Naive thymus-derived CD4-positive, alpha-beta T cell (primary cell): ENCODE measurements at regions of chr17 and their contacts with region 1.

Region 1: GRCh38 chr17:21043286-21044232 is 748 bp upstream of the USP22 start:
- DNase-seq: peak; percentile 87 to 99 (median 96)
- ATAC-seq: peak; percentile 88
- H3K4me3 ChIP-seq: peak overlapping the region; percentile 73
- H3K4me3 Mint-ChIP-seq: peak overlapping the region; percentile 75 to 96 (median 86)
- H3K27ac ChIP-seq: peak overlapping the region; percentile 91
- H3K27ac Mint-ChIP-seq: peak overlapping the region; percentile 90 to 97 (median 93)
- H3K4me1 ChIP-seq: peaks cover 12 to 22% of the 10 kb centered on the region in 2 donors
- H3K4me1 Mint-ChIP-seq: peaks cover 15 to 40% (median 31%) of the 10 kb centered on the region in 7 donors
- H3K27me3 ChIP-seq: no peaks in the 10 kb centered on the region
- H3K27me3 Mint-ChIP-seq: peaks cover 0 to 4% (median 0%) of the 10 kb centered on the region in 5 donors

Region 2: GRCh38 chr17:20908373-20909273 is 134.9 kb before region 1 on chr17:
- CTCF ChIA-PET with region 1: interaction called, 5 read pairs
- POLR2A ChIA-PET with region 1: no interaction called
- intact Hi-C with region 1: loop called (anchors 1 kb)
- DNase-seq: peak; percentile 65 to 80 (median 77)
- ATAC-seq: peak; percentile 98
- H3K4me3 ChIP-seq: peak overlapping the region; percentile 50
- H3K4me3 Mint-ChIP-seq: peak overlapping the region; percentile 68 to 87 (median 82)
- H3K27ac ChIP-seq: peak overlapping the region; percentile 63
- H3K27ac Mint-ChIP-seq: peak overlapping the region in 8 of 9 donors; percentile 66 to 81 (median 74)
- H3K4me1 ChIP-seq: peaks cover 2 to 7% of the 10 kb centered on the region in 2 donors
- H3K4me1 Mint-ChIP-seq: peaks cover 0 to 16% (median 11%) of the 10 kb centered on the region in 7 donors
- H3K27me3 ChIP-seq: no peaks in the 10 kb centered on the region
- H3K27me3 Mint-ChIP-seq: peaks cover under 1 to 25% (median 10%) of the 10 kb centered on the region in 5 donors

Region 3: GRCh38 chr17:20935740-20936139 is 107.8 kb before region 1 on chr17:
- CTCF ChIA-PET with region 1: no interaction called
- POLR2A ChIA-PET with region 1: no interaction called
- intact Hi-C with region 1: no loop called
- DNase-seq: no peak
- ATAC-seq: no peak
- H3K4me3 ChIP-seq: no peak overlapping the region
- H3K4me3 Mint-ChIP-seq: no peak overlapping the region
- H3K27ac ChIP-seq: no peak overlapping the region
- H3K27ac Mint-ChIP-seq: no peak overlapping the region
- H3K4me1 ChIP-seq: no peaks in the 10 kb centered on the region
- H3K4me1 Mint-ChIP-seq: peaks cover 0 to 2% (median 0%) of the 10 kb centered on the region in 7 donors
- H3K27me3 ChIP-seq: no peaks in the 10 kb centered on the region
- H3K27me3 Mint-ChIP-seq: peaks cover 0 to 7% (median 0%) of the 10 kb centered on the region in 5 donors

Region 4: DNA sequence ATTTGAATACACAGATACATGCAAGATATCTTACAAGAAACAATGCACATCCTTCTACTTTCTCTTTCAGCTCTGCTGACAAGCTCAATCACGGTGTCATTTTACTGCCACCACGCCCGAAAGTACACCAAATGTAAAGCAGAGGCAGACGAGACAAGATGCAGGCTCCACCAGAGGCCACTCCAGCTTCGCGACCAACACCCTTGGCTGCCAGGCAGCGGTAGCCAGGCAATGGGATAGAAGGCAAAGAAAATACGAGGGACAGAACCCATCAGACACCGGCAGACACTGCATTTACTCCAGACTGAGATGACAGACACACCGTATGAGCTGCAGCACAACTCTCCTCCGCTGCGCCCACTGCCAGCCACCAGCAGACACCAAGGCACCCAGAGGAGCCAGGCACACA is 41.7 kb before region 1 on chr17:
- CTCF ChIA-PET with region 1: no interaction called
- POLR2A ChIA-PET with region 1: no interaction called
- intact Hi-C with region 1: loop called in 1 of 2 experiments (anchors 5 kb)
- DNase-seq: no peak
- ATAC-seq: no peak
- H3K4me3 ChIP-seq: no peak overlapping the region
- H3K4me3 Mint-ChIP-seq: peak overlapping the region in 8 of 10 donors; percentile 3 to 65 (median 33)
- H3K27ac ChIP-seq: peak overlapping the region; percentile 43
- H3K27ac Mint-ChIP-seq: peak overlapping the region; percentile 58 to 93 (median 86)
- H3K4me1 ChIP-seq: peaks cover 0 to 35% of the 10 kb centered on the region in 2 donors
- H3K4me1 Mint-ChIP-seq: peaks cover 27 to 49% (median 44%) of the 10 kb centered on the region in 7 donors
- H3K27me3 ChIP-seq: no peaks in the 10 kb centered on the region
- H3K27me3 Mint-ChIP-seq: no peaks in the 10 kb centered on the region

Region 5: GRCh38 chr17:21098934-21099689 is 55.6 kb after region 1 on chr17:
- CTCF ChIA-PET with region 1: interaction called, 6 read pairs
- POLR2A ChIA-PET with region 1: interaction called, 6 read pairs
- intact Hi-C with region 1: loop called (anchors 1 kb)
- DNase-seq: peak; percentile 16 to 76 (median 67)
- ATAC-seq: peak; percentile 96
- H3K4me3 ChIP-seq: peak overlapping the region; percentile 70
- H3K4me3 Mint-ChIP-seq: peak overlapping the region; percentile 86 to 96 (median 90)
- H3K27ac ChIP-seq: no peak overlapping the region
- H3K27ac Mint-ChIP-seq: peak overlapping the region in 7 of 9 donors; percentile 3 to 94 (median 31)
- H3K4me1 ChIP-seq: peaks cover 0 to 4% of the 10 kb centered on the region in 2 donors
- H3K4me1 Mint-ChIP-seq: peaks cover 11 to 24% (median 16%) of the 10 kb centered on the region in 7 donors
- H3K27me3 ChIP-seq: no peaks in the 10 kb centered on the region
- H3K27me3 Mint-ChIP-seq: no peaks in the 10 kb centered on the region

Region 6: DNA sequence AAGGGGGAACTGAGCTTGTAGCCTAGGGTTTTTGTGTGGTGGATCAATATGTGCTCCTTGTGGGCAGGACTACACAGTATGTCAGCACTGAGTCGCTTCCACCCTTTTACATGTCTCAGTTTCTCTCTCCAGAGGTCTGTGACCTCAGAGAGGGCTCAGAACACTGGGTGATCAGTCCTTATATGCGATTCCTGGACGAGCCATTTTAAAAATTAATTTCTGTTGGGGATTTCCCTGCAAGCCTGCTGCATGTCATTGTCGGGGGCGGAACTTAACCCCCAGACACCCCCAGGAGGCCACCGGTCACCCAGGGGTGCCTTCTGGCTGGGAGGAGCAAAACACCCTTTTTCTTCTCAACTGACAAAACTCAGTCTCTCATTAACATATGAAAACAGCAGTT is 97.4 kb after region 1 on chr17:
- CTCF ChIA-PET with region 1: no interaction called
- POLR2A ChIA-PET with region 1: no interaction called
- intact Hi-C with region 1: no loop called
- DNase-seq: no peak
- ATAC-seq: no peak
- H3K4me3 ChIP-seq: no peak overlapping the region
- H3K4me3 Mint-ChIP-seq: peak overlapping the region in 1 of 10 donors; percentile 11
- H3K27ac ChIP-seq: no peak overlapping the region
- H3K27ac Mint-ChIP-seq: no peak overlapping the region
- H3K4me1 ChIP-seq: no peaks in the 10 kb centered on the region
- H3K4me1 Mint-ChIP-seq: peaks cover 0 to 9% (median 5%) of the 10 kb centered on the region in 7 donors
- H3K27me3 ChIP-seq: no peaks in the 10 kb centered on the region
- H3K27me3 Mint-ChIP-seq: no peaks in the 10 kb centered on the region

Region 7: DNA sequence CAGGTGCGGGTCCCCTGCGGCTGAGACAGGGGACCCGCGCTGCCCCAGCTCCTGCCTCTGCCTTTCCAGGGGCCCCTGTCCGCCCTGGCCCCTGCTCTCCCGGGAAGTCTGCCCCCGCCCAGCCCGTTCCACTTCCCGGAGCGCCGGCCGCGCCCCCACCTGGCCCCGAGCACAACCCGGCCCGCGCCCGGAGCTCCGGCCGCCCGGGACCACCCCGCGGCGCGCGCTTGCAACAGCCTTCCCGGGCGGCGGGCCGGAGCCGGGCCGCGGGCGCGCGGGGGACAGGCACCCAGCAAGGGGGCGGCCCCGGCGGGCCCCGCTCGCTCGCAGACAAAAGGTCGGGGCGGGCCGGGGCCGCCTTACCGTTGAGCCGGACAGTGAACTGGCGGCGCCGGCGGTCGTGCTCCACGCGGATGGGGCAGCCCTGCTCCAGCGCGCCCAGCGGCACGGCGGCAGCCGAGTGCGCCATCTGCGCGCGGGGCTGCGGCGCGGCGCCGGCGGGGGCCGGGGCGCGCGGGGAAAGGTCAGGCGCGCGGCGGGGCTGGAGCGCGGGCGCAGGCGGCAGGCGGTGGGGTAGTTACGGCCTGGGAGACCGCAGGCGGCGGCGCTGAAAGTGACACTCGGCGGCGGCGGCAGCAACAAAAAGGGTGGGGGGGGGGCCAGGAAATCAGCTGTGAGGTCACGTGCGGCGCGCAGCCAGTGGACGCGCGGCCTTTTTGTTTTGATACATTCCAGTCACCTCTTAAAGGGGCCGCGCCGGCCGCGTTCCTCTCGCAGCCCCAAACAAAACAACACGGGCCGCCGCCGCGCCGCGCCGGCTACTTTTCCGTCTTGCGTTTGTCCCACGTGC is 209.5 kb after region 1 on chr17 and contains the start of gene NATD1:
- CTCF ChIA-PET with region 1: no interaction called
- POLR2A ChIA-PET with region 1: interaction called, 4 read pairs
- intact Hi-C with region 1: loop called (anchors 1 kb)
- DNase-seq: peak; percentile 60 to 82 (median 75)
- ATAC-seq: peak; percentile 90
- H3K4me3 ChIP-seq: peak within 1 kb of the TSS; percentile 73
- H3K4me3 Mint-ChIP-seq: peak within 1 kb of the TSS; percentile 78 to 97 (median 88)
- H3K27ac ChIP-seq: peak within 1 kb of the TSS; percentile 77
- H3K27ac Mint-ChIP-seq: peak within 1 kb of the TSS; percentile 66 to 97 (median 93)
- H3K4me1 ChIP-seq: peaks cover 7 to 12% of the 10 kb centered on the region in 2 donors
- H3K4me1 Mint-ChIP-seq: peaks cover 19 to 43% (median 39%) of the 10 kb centered on the region in 7 donors
- H3K27me3 ChIP-seq: no peaks in the 10 kb centered on the region
- H3K27me3 Mint-ChIP-seq: peaks cover 0 to 35% (median 0%) of the 10 kb centered on the region in 5 donors
- total RNA-seq, gene NATD1: 2.5 to 11.1 (median 8.9) TPM

Region 8: DNA sequence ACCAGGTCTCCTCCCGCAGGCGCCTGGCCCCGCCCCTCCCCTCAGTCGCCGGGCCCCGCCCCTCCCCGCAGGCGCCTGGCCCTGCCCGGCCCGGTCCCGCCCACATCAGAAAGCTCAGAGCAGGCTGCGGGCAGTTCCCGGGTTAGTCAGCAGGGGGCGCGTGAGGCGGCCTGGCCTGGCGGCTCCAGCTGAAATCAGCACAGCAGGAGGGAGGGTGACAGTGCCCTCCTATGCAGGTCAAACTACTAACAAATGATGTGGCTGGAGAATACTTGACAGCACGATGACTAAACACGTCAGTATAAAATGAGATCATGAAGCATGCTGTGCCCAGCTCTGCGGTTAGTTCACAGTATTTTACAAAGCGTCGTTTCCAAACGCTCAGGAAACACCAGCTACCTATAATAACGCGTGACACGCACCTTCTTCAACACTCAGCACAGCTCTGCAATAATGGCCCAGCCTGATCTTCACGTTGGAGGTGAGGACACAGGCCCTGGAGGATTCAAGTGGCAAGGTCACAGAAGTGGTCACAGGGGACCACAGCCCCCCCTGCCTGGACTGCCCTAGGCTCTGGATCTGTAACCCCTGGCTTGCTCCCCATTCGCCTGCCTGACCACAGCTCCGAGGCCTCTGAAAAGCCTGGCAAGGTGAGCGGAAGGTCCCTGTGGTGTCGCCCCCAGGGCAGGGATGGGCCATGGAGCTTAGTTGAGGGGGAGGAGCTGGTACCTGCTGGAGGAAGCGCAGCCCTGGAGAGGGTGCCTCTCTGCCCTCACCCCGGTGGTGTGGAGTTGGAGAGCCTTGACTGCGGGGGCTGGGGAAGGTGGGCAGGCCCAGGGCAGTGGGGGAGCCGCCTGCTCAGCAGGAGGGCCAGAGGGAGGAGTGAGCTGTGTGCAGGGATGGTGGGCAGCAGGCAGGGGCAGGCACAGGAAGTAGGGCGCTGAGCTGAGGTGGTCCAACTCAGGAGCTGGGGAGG is 413.8 kb after region 1 on chr17:
- CTCF ChIA-PET with region 1: no interaction called
- POLR2A ChIA-PET with region 1: no interaction called
- intact Hi-C with region 1: loop called in 1 of 2 experiments (anchors 1 kb)
- DNase-seq: peak; percentile 85 to 97 (median 90)
- ATAC-seq: peak; percentile 97
- H3K4me3 ChIP-seq: no peak overlapping the region
- H3K4me3 Mint-ChIP-seq: peak overlapping the region in 7 of 10 donors; percentile 27 to 71 (median 43)
- H3K27ac ChIP-seq: peak overlapping the region; percentile 19
- H3K27ac Mint-ChIP-seq: peak overlapping the region in 7 of 9 donors; percentile 36 to 82 (median 73)
- H3K4me1 ChIP-seq: peaks cover 0 to 6% of the 10 kb centered on the region in 2 donors
- H3K4me1 Mint-ChIP-seq: peaks cover 10 to 25% (median 18%) of the 10 kb centered on the region in 7 donors
- H3K27me3 ChIP-seq: no peaks in the 10 kb centered on the region
- H3K27me3 Mint-ChIP-seq: peaks cover 0 to 37% (median 0%) of the 10 kb centered on the region in 5 donors